ENCODE measurements at regions of chr14 and their contacts with region 1.

Region 1: DNA sequence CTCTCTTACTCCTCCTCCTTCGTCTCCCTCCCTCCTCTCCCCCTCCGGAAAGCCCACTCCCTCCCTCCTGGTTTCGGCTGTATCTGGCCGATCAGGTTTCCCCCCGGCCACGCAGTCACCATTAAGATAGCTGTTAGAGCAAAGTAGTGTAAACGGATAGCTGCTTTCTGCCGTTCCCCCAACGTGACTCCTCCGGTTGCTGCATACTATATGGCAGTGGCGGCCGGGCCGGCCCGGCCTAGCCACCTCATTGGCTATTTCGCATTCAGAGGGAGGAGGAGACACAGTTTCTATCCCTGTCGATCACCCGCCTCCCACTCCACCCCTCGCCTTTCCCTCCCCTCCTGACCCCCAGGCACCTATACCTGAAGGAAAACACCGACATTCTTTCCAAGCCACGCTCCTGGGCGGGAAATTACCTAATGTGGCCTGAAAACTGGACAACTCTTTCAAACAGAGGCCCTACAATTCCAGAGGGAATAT is at the start of gene SIX4:
- DNase-seq: peak; percentile 98
- ATAC-seq: peak; percentile 70
- H3K4me3 ChIP-seq: peak within 1 kb of the TSS; percentile 86
- H3K27ac ChIP-seq: peak within 1 kb of the TSS; percentile 38
- H3K4me1 ChIP-seq: peaks cover 20% of the 10 kb centered on the region
- H3K27me3 ChIP-seq: no peaks in the 10 kb centered on the region
- CTCF ChIP-seq: no peak
- total RNA-seq, gene SIX4: 29.2 and 33.2 TPM in 2 replicates

Region 2: DNA sequence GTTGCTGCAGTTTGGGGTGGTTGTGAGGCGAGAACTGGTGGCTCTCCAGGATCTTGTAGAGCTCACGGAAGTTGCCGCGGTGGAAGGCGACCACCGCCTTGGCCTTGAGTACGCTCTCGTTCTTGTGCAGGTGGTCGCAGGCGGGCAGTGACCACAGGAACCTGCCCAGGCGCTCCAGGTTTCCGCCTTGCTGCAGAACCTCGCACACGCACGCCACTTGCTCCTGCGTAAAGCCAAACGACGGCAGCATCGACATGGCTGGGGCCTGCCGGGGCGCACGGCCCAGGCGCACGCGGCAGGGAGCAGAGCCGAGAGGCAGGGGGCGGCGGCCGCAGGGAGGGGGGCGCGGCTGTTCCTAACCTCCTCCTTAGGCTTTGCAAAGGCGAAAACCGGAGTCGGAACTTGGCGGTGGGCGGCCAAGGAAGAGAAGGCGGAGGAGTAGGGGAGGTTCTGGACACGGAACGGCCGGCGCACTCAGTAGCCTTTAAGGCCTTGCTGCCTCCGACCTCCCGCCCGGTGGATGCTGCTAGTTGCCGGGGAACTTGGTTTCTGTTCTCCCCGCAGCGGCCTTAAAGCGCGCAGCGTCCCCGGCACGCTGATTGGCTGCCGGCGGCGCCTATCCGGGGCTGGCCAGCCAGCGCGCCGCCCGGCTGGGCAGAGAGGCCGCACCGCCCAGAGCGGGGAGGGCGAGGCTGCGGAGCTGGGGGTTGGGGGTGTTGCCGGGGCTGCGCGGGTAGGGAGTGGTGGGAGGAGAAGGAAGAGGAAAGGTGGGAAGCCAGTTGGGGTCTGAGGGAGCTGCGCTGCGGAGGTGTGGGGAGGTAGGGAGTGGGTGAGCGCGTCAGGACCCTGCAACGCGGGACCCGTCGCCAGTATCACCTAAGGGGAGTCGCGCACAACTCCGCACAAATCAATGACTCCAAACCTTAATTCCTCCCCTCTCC is 75.0 kb before region 1 on chr14 and contains the start of gene SIX1:
- CTCF ChIA-PET with region 1: no interaction called
- POLR2A ChIA-PET with region 1: interaction called, 7 read pairs
- intact Hi-C with region 1: loop called (anchors 1 kb)
- DNase-seq: peak; percentile 97
- ATAC-seq: peak; percentile 78
- H3K4me3 ChIP-seq: peak within 1 kb of the TSS; percentile 75
- H3K27ac ChIP-seq: 0 out of 2 replicates have a peak within 1 kb of the TSS, but pooled peaks have one; percentile 6
- H3K4me1 ChIP-seq: peaks cover 21% of the 10 kb centered on the region
- H3K27me3 ChIP-seq: no peaks in the 10 kb centered on the region
- CTCF ChIP-seq: no peak
- total RNA-seq, gene SIX1: 16.5 and 18.2 TPM in 2 replicates

Region 3: GRCh38 chr14:60757617-60758016 is 33.4 kb after region 1 on chr14:
- CTCF ChIA-PET with region 1: no interaction called
- POLR2A ChIA-PET with region 1: no interaction called
- intact Hi-C with region 1: loop called (anchors 1 kb)
- DNase-seq: peak; percentile 98
- ATAC-seq: peak; percentile 81
- H3K4me3 ChIP-seq: peak overlapping the region; percentile 41
- H3K27ac ChIP-seq: peak overlapping the region; percentile 78
- H3K4me1 ChIP-seq: peaks cover 59% of the 10 kb centered on the region
- H3K27me3 ChIP-seq: no peaks in the 10 kb centered on the region
- CTCF ChIP-seq: no peak

Region 4: GRCh38 chr14:60845523-60845922 is 121.3 kb after region 1 on chr14:
- CTCF ChIA-PET with region 1: no interaction called
- POLR2A ChIA-PET with region 1: no interaction called
- intact Hi-C with region 1: no loop called
- DNase-seq: no peak
- ATAC-seq: no peak
- H3K4me3 ChIP-seq: no peak overlapping the region
- H3K27ac ChIP-seq: no peak overlapping the region
- H3K4me1 ChIP-seq: no peaks in the 10 kb centered on the region
- H3K27me3 ChIP-seq: no peaks in the 10 kb centered on the region
- CTCF ChIP-seq: no peak

Region 5: DNA sequence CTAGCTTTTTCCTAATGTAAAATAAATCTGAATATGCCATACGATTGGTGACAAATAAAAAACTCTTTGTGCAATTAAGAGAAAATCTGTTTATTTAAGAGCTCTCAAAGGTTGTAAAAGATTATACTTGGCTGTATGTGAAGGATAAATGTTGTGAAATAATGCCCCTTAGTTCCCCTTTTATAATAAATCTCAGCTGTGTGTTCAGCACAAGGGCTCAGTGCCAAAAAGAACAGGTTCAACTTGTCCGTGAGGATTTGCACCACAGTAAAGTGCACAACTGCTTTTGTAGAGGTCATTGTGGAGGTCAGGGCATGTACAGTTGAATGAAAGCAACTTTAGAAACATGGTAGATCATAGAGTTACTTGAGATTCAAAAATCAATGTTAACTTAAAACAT is 138.1 kb after region 1 on chr14:
- CTCF ChIA-PET with region 1: no interaction called
- POLR2A ChIA-PET with region 1: no interaction called
- intact Hi-C with region 1: loop called (anchors 5 kb)
- DNase-seq: peak; percentile 92
- ATAC-seq: peak; percentile 57
- H3K4me3 ChIP-seq: no peak overlapping the region
- H3K27ac ChIP-seq: no peak overlapping the region
- H3K4me1 ChIP-seq: peaks cover 20% of the 10 kb centered on the region
- H3K27me3 ChIP-seq: no peaks in the 10 kb centered on the region
- CTCF ChIP-seq: no peak

Region 6: DNA sequence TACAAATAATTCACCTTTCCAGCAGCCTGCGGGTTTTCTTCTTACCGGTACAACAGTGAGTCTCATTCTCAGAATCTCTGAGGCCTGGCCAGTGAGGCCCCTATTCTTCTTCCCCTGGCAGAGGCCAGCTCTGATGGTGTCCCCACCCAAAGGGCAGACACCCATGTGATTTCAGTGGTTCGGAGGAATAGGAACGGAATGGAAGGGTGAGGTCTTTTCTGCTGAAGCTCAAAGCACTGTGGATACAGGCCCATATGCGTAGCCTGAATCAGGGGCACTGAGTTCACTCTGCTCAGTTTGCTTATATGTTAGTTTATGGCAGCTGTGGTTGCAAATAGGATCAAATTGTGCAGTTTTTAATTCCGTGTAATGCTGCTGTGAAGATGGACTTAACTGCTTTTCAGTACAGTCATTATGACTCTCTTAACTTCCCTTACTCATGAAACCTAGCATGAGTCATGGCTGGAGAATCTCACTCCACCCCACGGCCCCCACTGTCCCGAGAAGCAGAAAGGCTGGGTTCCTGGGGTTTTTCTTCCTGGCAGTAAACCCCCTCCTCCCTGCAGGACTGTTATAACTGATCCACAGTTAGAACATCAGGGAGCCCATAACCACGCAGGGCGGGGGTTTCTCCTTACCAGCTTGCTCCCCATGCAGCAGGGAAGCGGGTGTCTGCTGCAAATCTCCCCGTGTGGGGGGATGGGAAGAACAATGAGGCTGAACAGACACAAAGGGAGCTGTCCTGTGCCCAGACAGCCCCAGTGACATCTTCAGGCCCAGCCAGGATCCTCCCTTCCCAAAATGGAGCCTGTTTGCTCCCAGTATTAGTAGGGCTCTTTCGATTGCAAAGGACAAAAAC is 379.5 kb after region 1 on chr14:
- CTCF ChIA-PET with region 1: no interaction called
- POLR2A ChIA-PET with region 1: no interaction called
- intact Hi-C with region 1: loop called (anchors 5 kb)
- DNase-seq: peak; percentile 99
- ATAC-seq: peak; percentile 86
- H3K4me3 ChIP-seq: peak overlapping the region; percentile 17; the same call in 1 of the 2 replicates
- H3K27ac ChIP-seq: peak overlapping the region; percentile 96
- H3K4me1 ChIP-seq: peaks cover 45% of the 10 kb centered on the region
- H3K27me3 ChIP-seq: no peaks in the 10 kb centered on the region
- CTCF ChIP-seq: no peak

Measured in PC-3 (cell line).